Activated naive CD4-positive, alpha-beta T cell treated with anti-CD3 and anti-CD28 coated beads, Interleukin-2, amount 10 ng/mL, durations not matched to agents 7 days and 5 days (primary cell): ENCODE measurements at regions of chr7 and their contacts with region 1.

Region 1: DNA sequence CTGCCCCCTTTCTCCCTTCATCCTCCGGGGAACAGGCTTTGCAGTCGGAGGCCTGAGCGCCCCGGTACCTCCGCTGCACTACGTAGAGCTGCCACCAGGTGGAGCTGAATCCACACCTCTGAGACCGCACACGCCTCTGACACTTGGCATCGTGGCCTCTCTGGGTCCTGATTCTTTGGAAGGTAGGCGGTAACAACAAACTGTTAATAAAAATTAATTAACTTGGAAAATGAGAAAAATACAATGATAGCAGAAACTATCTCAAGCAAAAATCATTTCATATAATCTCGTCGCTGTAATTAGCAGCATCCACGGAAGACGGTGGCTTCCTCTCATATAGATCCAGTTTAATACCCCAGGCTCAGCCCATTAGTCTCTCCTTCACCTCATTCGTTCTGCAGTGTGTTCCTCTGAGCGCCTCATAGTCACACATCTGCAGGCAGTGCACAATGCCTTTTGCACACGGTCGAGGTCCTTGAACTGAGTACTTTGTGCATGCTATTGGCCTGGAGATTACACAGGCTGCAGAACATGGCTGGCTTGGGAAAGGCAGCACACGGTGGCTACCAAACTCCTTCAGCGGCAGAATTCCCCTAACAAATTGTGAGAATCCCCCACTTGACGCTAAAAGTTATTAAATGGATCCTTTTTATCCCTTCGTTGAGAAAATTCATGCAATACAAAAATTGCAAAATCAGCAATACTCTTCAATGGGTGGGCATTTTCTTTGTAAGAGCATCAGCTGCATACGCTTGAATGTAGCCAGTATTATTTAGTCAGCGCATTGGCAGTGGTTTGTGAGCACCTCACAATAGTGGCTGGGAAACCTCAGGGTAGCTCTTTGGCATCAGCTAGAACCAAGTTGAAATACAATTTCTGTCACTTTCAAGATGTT is 18.7 kb downstream of the OR9A2 start:
- DNase-seq: peak; percentile 84
- H3K4me3 Mint-ChIP-seq: no peak overlapping the region
- H3K27ac Mint-ChIP-seq: no peak overlapping the region
- H3K4me1 Mint-ChIP-seq: peaks cover 4% of the 10 kb centered on the region
- H3K27me3 Mint-ChIP-seq: peaks cover 27% of the 10 kb centered on the region

Region 2: GRCh38 chr7:142632291-142633134 is 375.7 kb before region 1 on chr7:
- CTCF ChIA-PET with region 1: interaction called, 11 read pairs
- DNase-seq: peak; percentile 61
- H3K4me3 Mint-ChIP-seq: no peak overlapping the region
- H3K27ac Mint-ChIP-seq: peak overlapping the region; percentile 24
- H3K4me1 Mint-ChIP-seq: peaks cover 20% of the 10 kb centered on the region
- H3K27me3 Mint-ChIP-seq: peaks cover 8% of the 10 kb centered on the region

Region 3: DNA sequence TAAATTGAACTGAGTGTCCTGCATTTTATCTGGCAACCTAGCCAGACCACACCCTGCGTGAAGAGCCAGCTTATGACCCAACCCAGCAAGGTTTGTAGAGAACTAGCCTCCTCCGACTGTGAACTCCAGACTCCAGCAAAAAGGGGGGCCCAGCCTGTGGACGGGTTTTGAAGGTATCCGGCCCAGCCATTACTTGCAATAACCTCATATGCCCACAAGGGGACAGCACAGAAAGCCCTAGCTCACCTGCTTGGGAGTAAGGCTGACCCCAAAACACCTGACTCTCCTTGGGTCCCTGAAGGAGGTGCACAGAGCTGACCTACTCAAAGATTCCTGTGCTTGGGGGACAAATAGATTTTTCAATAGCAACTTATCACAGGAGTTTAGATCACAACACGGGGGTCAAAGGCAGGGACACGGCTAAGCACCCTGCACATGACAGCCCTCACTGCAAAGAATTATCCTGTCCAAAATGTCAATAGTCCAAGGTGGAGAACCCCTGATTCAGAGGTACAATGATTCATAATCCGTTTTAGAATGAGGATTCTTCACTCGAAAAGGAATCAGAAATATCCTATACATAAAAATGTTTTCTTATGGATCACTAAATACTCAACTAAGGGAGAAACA is 127.3 kb before region 1 on chr7:
- CTCF ChIA-PET with region 1: interaction called, 18 read pairs
- DNase-seq: peak; percentile 66
- H3K4me3 Mint-ChIP-seq: no peak overlapping the region
- H3K27ac Mint-ChIP-seq: no peak overlapping the region
- H3K4me1 Mint-ChIP-seq: no peaks in the 10 kb centered on the region
- H3K27me3 Mint-ChIP-seq: peaks cover 39% of the 10 kb centered on the region

Region 4: GRCh38 chr7:143068446-143068845 is 60.2 kb after region 1 on chr7:
- CTCF ChIA-PET with region 1: no interaction called
- DNase-seq: no peak
- H3K4me3 Mint-ChIP-seq: no peak overlapping the region
- H3K27ac Mint-ChIP-seq: no peak overlapping the region
- H3K4me1 Mint-ChIP-seq: no peaks in the 10 kb centered on the region
- H3K27me3 Mint-ChIP-seq: peaks cover 7% of the 10 kb centered on the region

Region 5: GRCh38 chr7:143214789-143215679 is 206.8 kb after region 1 on chr7:
- CTCF ChIA-PET with region 1: interaction called, 206 read pairs
- DNase-seq: peak; percentile 69
- H3K4me3 Mint-ChIP-seq: no peak overlapping the region
- H3K27ac Mint-ChIP-seq: no peak overlapping the region
- H3K4me1 Mint-ChIP-seq: no peaks in the 10 kb centered on the region
- H3K27me3 Mint-ChIP-seq: peaks cover 16% of the 10 kb centered on the region

Region 6: DNA sequence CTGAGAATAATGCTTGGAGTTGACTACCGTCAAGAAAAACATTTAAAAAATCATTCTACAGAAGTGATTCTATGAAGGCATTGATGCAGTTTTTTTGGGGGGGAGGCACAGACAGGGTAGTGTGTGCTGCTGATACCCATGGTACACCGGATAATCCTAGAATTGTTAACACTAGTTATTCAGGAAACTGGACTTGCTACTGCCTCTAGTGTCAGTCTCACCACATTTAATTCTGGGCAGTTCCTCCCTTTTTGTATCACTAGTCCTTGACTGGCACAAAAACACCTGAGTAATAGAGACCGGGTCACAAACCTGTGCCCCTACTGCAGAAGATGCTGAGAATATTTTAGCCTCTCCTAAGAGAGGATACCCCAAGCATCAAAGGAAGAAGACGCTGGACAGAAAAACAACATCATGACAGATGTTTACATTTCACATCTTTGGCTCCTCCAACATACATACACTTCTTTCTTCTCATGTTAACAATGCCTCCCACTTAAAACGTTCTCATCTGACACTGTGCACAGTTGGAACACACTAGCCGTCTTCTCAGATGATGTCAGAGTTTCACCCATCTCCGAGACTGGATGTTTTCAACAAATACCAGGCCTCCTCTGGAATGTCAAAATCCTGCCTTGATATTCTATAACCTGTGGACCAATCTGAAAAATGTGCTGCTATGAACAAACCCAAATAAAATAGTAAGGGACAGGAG is 906.8 kb after region 1 on chr7:
- CTCF ChIA-PET with region 1: no interaction called
- DNase-seq: no peak
- H3K4me3 Mint-ChIP-seq: no peak overlapping the region
- H3K27ac Mint-ChIP-seq: no peak overlapping the region
- H3K4me1 Mint-ChIP-seq: no peaks in the 10 kb centered on the region
- H3K27me3 Mint-ChIP-seq: peaks cover 7% of the 10 kb centered on the region